Vagina (tissue), 2 donors: ENCODE measurements at regions of chr20 and their contacts with region 1.

Region 1: DNA sequence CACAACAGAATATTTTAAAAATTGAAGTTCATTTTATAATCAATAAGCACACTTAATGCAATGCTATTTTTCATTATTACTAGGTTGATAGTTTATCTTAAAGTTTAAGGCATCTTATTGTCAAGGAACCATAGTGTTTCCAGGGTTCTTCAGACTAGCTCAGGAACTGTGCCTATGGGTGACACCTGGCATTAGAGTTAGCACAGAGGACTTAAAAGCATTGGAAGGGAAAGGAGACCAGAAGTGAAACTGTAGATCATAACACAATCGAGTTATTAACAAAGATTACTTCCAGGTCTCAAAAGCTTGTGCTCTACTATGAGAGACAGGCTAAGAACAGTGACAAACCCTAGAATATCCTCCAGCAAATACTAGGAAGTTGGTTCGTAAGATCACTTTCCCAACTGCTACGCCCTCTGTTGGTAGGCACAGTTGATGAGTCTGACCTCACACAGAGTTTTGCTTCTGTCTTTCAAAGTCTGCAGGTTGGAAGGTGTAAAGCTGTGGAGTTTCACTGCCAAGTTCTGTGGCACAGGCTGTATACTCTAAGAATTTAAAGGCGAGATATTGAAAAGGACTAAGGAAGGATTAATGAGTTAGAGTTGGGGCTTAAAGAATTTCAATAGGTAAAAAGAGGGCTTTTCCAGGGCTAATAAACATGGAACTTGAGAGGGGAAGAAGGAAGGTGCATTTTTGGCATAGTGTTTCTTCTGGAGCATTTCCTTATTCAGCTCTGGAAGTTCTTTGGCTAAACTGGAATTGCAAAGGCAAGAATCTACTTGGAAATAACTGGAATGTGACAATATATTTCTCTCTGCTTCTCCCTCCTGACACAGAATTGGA is 531.3 kb upstream of the JAG1 start:
- DNase-seq: no peak
- H3K4me3 ChIP-seq: no peak overlapping the region
- H3K27ac ChIP-seq: peak overlapping the region; percentile 9
- H3K4me1 ChIP-seq: no peaks in the 10 kb centered on the region
- H3K27me3 ChIP-seq: no peaks in the 10 kb centered on the region
- CTCF ChIP-seq: peak; percentile 19 to 56 (median 50)
- POLR2A ChIP-seq: no peak

Region 2: DNA sequence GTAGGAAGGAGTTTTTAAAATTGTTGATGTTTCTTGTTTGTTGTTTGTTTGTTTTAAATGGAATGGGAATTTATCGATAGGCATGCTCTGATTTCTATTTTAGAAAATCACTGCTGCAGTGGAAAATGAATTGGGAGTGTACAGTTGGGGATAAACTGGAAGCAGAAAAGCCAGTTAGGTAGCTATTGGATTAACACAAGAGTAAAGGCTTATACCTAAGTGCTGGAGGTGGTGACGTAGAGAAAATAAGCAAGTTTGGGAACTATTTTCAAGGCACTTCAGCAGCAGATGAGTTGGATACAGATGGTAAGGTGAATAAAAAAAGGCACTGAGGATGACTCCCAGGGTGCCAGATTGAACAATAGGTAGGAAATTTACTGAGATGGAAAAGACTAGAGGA is 1971.3 kb before region 1 on chr20:
- intact Hi-C with region 1: loop called (anchors 5 kb)
- DNase-seq: no peak
- H3K4me3 ChIP-seq: no peak overlapping the region
- H3K27ac ChIP-seq: no peak overlapping the region
- H3K4me1 ChIP-seq: no peaks in the 10 kb centered on the region
- H3K27me3 ChIP-seq: no peaks in the 10 kb centered on the region
- CTCF ChIP-seq: no peak
- POLR2A ChIP-seq: no peak